Mammary epithelial cell (primary cell): ENCODE measurements at regions of chr22 and their contacts with region 1.

Region 1: GRCh38 chr22:45246060-45246985 is 5.6 kb upstream of the KIAA0930 start:
- DNase-seq: peak; percentile 89
- H3K4me3 ChIP-seq: peak overlapping the region in 1 of 3 experiments; percentile 16
- H3K27ac ChIP-seq: peak overlapping the region; percentile 97
- H3K4me1 ChIP-seq: peaks cover 20% of the 10 kb centered on the region
- H3K27me3 ChIP-seq: no peaks in the 10 kb centered on the region
- CTCF ChIP-seq: no peak

Region 2: GRCh38 chr22:45212306-45212709 is 34.0 kb before region 1 on chr22:
- CTCF ChIA-PET with region 1: no interaction called
- dilution Hi-C with region 1: no loop called
- in situ Hi-C with region 1: no loop called
- intact Hi-C with region 1: loop called (anchors 5 kb)
- DNase-seq: peak; percentile 88
- H3K4me3 ChIP-seq: peak overlapping the region; percentile 34 to 37 (median 35)
- H3K27ac ChIP-seq: peak overlapping the region; percentile 66
- H3K4me1 ChIP-seq: peaks cover 24% of the 10 kb centered on the region
- H3K27me3 ChIP-seq: no peaks in the 10 kb centered on the region
- CTCF ChIP-seq: peak in 1 of 2 donors; percentile 14

Region 3: GRCh38 chr22:45318168-45318557 is 71.8 kb after region 1 on chr22:
- CTCF ChIA-PET with region 1: no interaction called
- dilution Hi-C with region 1: no loop called
- in situ Hi-C with region 1: no loop called
- intact Hi-C with region 1: no loop called
- DNase-seq: peak; percentile 79
- H3K4me3 ChIP-seq: peak overlapping the region in 1 of 3 experiments; percentile 11
- H3K27ac ChIP-seq: peak overlapping the region; percentile 71
- H3K4me1 ChIP-seq: peaks cover 26% of the 10 kb centered on the region
- H3K27me3 ChIP-seq: no peaks in the 10 kb centered on the region
- CTCF ChIP-seq: no peak